Lower leg skin (tissue), 4 donors: ENCODE measurements at regions of chr22 and their contacts with region 1.

Region 1: GRCh38 chr22:38051900-38052862 is 5.0 kb upstream of the PICK1 start:
- DNase-seq: peak; percentile 64 to 96
- H3K4me3 ChIP-seq: no peak overlapping the region
- CTCF ChIP-seq: peak in 1 of 3 donors; percentile 73
- POLR2A ChIP-seq: no peak

Region 2: GRCh38 chr22:37933711-37934376 is 118.3 kb before region 1 on chr22:
- intact Hi-C with region 1: no loop called
- DNase-seq: peak; percentile 83 to 97
- H3K4me3 ChIP-seq: no peak overlapping the region
- CTCF ChIP-seq: peak in 1 of 3 donors; percentile 92
- POLR2A ChIP-seq: no peak

Region 3: GRCh38 chr22:38353142-38353629 is 301.0 kb after region 1 on chr22:
- intact Hi-C with region 1: loop called (anchors 10 kb)
- DNase-seq: peak; percentile 37 to 94
- H3K4me3 ChIP-seq: no peak overlapping the region
- CTCF ChIP-seq: peak in 1 of 3 donors; percentile 93
- POLR2A ChIP-seq: no peak